ENCODE measurements at regions of chr6 and their contacts with region 1.

Region 1: DNA sequence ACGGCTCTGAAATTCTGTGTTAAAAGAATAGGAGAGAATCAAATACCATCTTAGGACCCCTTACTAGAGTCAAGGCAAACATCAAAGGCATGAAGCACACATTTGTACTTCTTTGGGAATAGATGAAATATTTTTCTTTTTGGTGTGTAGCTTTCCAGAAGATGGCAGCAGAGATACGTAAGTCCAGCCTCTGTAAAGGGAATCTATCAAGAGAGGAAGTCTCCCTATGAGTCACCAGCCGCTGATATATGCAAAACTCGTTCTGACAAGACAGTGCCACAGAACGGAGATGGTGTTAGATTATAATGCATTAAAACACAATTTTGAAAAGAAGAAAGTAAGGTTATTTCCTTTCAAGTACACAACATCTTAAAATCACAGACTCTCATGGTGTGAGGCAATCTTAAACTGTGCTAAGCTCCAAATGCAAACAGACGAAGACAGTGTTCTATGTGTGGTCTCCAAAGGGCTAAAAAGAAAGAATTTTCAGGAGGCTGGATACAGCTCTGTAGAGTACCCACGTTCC is 120.0 kb upstream of the AGPAT4 start:
- DNase-seq: peak in 1 of 10 donors; percentile 35

Region 2: GRCh38 chr6:161418463-161418945 is 24.6 kb after region 1 on chr6:
- intact Hi-C with region 1: no loop called
- DNase-seq: peak in 1 of 10 donors; percentile 54

Region 3: GRCh38 chr6:161618831-161619454 is 225.0 kb after region 1 on chr6:
- intact Hi-C with region 1: loop called (anchors 2 kb)
- DNase-seq: peak; percentile 40 to 94 (median 73)